Panc1 (cell line): ENCODE measurements at regions of chr9 and their contacts with region 1.

Region 1: DNA sequence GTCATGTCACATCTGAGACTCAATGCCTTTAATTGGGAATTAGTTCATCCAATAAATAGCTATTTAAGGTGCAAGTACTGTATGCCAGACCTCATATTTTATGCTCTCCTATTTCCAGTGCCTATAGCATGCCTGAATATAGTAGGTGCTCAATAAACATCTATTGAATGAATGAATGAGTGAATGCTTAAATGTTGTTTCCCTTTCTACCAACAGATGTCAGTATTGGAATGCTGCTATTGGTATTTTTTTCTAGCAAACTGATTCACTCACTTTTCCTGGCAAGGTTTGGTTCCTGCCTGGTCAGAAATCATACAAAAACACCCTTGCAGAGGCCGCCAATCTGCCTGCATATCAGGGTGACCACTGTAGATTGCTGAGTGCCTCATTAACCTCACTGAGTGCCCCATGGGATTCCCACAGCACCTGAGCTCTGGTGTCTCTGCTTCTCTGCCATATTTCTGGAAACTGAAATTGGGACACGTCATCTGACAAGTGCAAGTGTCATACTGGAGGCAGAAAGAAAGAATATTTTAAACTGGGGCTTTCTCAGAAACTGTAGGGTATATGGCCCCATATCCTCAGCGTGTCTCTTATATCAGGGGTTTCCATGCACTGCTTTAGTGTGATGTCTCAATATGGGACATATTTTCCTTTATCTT is 359.7 kb downstream of the TRIM32 start:
- DNase-seq: no peak
- ATAC-seq: no peak
- H3K4me3 ChIP-seq: no peak overlapping the region
- H3K27ac ChIP-seq: no peak overlapping the region
- H3K4me1 ChIP-seq: no peaks in the 10 kb centered on the region
- H3K27me3 ChIP-seq: no peaks in the 10 kb centered on the region
- CTCF ChIP-seq: peak; percentile 26

Region 2: GRCh38 chr9:117060963-117061362 is 14.2 kb after region 1 on chr9:
- CTCF ChIA-PET with region 1: no interaction called
- POLR2A ChIA-PET with region 1: no interaction called
- in situ Hi-C with region 1: no loop called
- intact Hi-C with region 1: loop called (anchors 1 kb)
- DNase-seq: no peak
- ATAC-seq: no peak
- H3K4me3 ChIP-seq: no peak overlapping the region
- H3K27ac ChIP-seq: no peak overlapping the region
- H3K4me1 ChIP-seq: no peaks in the 10 kb centered on the region
- H3K27me3 ChIP-seq: no peaks in the 10 kb centered on the region
- CTCF ChIP-seq: no peak